ENCODE measurements at regions of chr4 and their contacts with region 1.

Region 1: DNA sequence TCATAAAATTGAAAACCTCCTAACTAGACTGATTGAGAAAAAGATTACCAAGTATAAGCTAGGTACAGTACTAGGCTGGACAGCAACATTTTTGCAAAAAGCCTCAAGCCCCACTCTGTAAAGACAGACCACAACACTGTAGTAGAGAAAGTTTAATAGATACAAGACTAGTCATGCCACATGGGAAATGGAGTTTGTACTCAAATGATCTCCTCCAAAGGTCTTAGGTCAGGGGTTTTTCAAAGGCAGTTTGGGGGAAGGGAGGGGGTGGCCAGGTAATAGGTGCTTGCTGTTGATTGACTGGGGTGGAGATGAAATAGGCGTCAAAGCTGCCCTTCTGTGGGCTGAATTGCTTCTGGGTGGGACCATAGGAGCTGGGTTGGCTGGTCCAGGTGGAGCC is 14.2 kb downstream of the CNGA1 start:
- DNase-seq: no peak
- ATAC-seq: no peak
- H3K4me3 ChIP-seq: no peak overlapping the region
- H3K27ac ChIP-seq: no peak overlapping the region
- H3K4me1 ChIP-seq: no peaks in the 10 kb centered on the region
- H3K27me3 ChIP-seq: no peaks in the 10 kb centered on the region

Region 2: DNA sequence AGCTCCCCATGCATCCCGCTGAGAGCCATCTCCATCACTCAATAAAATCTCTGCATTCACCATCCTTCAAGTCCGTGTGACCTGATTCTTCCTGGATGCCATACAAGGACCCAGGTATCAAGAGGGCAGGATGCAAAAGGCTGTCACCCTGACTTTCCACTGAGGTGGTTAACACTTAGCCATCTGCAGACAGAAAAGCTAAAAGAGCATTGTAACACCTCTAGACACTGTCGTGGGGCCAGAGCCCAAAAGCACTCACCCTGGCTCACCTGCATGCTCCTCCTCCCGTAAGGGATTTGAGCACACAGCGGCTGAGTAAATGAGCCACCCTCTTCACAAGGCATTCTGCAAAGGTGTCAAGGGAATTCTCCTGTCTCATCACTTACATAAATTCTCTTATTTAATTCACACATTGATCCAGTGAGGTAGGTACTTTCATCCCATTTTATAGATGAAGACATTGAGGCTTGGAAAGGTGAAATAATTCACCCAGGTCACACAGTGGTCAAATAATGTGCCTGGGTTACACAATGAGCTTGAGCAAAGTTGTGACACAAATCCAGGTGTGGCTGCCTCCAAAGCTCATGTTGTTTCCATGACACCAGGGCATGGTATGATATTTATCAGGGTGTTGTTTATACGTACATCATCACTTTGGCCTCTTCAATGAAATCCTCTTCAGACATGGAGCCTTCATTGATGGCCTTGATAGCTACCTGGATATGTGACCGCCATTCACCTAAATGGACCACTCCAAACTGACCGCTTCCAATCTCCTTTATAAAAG is 83.7 kb after region 1 on chr4:
- intact Hi-C with region 1: loop called (anchors 2 kb)
- DNase-seq: no peak
- ATAC-seq: no peak
- H3K4me3 ChIP-seq: no peak overlapping the region
- H3K27ac ChIP-seq: no peak overlapping the region
- H3K4me1 ChIP-seq: no peaks in the 10 kb centered on the region
- H3K27me3 ChIP-seq: no peaks in the 10 kb centered on the region

Measured in aorta (tissue), 5 donors.